PC-9 (cell line): ENCODE measurements at regions of chr5 and their contacts with region 1.

Region 1: DNA sequence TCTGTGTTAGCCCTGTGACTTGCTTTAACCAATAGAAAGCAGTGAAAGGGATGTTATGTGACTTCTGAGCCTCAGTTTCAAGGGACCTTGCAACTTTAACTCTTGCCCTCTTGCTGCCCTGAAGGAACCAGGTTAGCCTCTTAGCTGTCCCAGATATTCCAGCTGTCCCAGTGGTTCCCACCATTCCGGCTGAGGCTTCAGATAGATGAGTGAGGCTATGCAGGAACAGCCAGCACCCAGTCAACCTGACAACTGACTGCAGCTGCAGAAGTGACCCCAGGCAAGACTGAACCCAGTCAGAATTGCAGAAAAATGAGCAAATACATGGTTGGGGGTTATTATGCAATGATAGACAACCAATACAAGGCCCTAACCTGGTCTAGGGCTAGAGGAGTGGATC is 10.4 kb upstream of the CDC23 start:
- DNase-seq: no peak
- H3K4me3 ChIP-seq: no peak overlapping the region
- H3K27ac ChIP-seq: no peak overlapping the region
- H3K4me1 ChIP-seq: no peaks in the 10 kb centered on the region
- H3K27me3 ChIP-seq: no peaks in the 10 kb centered on the region
- CTCF ChIP-seq: no peak

Region 2: DNA sequence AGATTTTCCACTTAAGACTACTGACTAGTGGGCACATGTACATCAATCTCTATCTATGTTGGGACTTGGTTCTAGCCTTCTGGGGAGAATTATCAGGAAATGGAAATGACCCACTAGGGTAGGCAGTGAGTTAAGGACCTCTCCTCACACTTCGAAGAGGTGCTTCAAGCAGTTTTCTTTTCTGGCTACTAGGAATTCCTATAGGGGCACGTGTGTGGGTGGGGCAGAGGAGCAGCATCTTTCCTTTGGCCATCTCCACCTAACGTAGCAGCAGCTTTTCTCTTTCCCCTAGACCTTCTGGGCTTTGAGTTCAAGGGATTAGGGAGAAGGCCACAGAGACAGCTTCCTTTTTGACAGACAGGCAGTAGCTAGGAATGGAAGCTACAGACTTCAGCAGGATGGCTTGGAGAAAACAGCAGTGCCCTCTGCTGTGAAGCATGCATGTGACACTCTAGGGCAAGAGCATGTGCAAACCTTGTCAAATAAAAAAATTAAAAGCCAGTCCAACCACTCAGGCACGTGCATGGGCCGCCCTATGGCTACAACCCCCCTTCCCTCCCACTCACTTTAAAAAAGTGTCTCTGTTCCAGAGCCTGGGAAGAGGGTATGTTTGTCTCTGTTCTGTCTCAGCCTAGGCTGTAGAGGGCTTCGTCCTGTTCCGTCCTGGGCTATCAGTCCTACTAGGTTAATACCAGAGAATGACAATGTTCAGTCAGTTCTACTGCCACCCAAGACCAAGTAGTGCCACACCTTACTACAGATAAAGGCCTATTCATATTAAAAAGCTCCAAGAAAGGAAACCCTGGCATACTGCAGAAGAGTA is 59.6 kb after region 1 on chr5:
- CTCF ChIA-PET with region 1: interaction called, 3 read pairs
- POLR2A ChIA-PET with region 1: no interaction called
- intact Hi-C with region 1: loop called (anchors 2 kb)
- DNase-seq: peak; percentile 43 to 50
- H3K4me3 ChIP-seq: no peak overlapping the region
- H3K27ac ChIP-seq: no peak overlapping the region
- H3K4me1 ChIP-seq: no peaks in the 10 kb centered on the region
- H3K27me3 ChIP-seq: no peaks in the 10 kb centered on the region
- CTCF ChIP-seq: peak; percentile 66

Region 3: DNA sequence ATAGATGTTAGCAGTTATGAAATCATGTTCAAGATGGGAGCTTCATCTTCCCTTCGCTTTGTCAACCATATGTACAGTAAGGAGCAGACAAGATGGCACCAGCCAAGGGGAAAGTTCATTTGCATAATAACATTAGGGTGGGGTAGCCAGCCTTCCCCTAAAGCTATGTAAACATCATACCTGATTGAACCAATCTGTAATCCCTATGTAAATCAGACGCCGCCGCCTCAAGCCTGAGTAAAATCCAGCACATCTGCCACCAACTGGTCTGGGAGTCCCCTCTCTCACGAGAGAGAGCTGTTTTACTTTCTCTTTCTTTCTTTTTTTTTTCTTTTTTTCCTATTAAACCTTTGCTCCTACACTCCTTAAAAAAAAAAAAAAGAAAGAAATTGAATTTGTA is 184.5 kb after region 1 on chr5:
- CTCF ChIA-PET with region 1: no interaction called
- POLR2A ChIA-PET with region 1: no interaction called
- intact Hi-C with region 1: loop called (anchors 2 kb)
- DNase-seq: no peak
- H3K4me3 ChIP-seq: no peak overlapping the region
- H3K27ac ChIP-seq: no peak overlapping the region
- H3K4me1 ChIP-seq: no peaks in the 10 kb centered on the region
- H3K27me3 ChIP-seq: no peaks in the 10 kb centered on the region
- CTCF ChIP-seq: no peak